Prostate gland (tissue), 2 donors: ENCODE measurements at regions of chr9 and their contacts with region 1.

Region 1: DNA sequence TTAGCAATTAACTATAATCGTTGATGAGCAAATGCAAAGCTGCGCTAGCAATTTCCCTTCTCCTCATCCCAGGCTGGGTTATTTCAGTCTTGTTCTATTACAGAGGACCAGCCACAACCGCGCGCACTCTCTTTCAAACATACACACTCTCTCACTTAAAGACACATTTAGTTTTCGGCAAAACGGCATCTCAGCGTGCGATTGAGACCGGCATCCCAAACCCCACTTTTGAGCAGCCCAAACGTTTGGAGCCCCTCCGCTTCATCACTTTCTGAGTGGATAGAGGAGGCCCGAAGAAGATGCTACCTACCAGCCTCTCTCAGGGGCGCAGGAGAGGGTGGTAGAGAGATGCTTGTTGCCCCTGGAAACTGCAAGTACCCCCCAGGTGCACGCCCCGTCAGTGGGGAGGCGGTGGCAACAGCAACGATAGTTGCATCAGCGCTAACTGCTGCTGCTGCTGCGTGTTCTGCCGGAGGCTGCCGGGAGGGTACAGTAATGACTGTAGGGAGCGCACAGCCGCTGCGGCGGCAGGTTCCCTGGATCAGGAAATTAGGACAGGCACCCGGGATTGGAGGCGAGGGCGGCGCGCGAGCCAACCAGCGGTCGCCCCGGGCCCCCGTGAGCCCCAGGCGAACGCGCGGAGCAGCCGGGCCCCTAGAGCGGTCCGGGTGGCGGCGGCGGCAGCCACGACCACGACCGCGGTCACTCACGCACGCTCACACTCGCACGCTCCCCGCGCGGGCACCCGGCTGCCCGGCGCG is 488 bp upstream of the VLDLR start:
- DNase-seq: peak; percentile 72
- H3K4me3 ChIP-seq: peak overlapping the region; percentile 56 to 73
- H3K27ac ChIP-seq: peak overlapping the region; percentile 78 to 86
- H3K4me1 ChIP-seq: peaks cover 5% of the 10 kb centered on the region
- H3K27me3 ChIP-seq: no peaks in the 10 kb centered on the region
- CTCF ChIP-seq: peak in 2 of 4 experiments; percentile 7 to 55
- POLR2A ChIP-seq: no peak

Region 2: DNA sequence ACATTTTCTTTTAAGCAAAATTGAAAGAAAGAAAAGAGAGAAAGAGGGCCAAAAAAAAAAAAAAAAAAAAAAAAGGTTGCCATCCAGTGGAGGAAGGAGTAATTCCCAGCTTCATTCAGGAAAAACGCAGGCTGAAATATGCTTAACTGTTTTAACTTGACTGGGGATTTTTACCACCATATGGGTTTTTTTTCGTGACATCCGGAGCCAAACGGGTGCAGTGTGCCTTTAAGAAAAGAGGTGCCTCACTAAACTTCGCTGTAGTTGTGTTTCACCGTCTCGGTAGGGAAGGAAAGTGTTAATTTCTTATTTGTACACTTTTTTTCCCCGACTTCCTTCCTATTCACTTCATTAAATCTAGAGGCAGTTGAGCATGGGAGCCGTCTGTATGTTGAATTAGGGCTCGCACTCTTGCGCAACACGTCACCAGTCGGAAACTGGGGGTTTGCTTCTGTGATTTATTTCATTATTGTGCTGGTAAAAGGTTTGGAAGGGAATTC is 462.9 kb before region 1 on chr9:
- intact Hi-C with region 1: loop called (anchors 10 kb)
- DNase-seq: peak; percentile 44
- H3K4me3 ChIP-seq: peak overlapping the region; percentile 27 to 28
- H3K27ac ChIP-seq: peak overlapping the region; percentile 42 to 65
- H3K4me1 ChIP-seq: no peaks in the 10 kb centered on the region
- H3K27me3 ChIP-seq: no peaks in the 10 kb centered on the region
- CTCF ChIP-seq: no peak
- POLR2A ChIP-seq: no peak

Region 3: GRCh38 chr9:2494562-2494961 is 126.5 kb before region 1 on chr9:
- intact Hi-C with region 1: loop called (anchors 10 kb)
- DNase-seq: no peak
- H3K4me3 ChIP-seq: no peak overlapping the region
- H3K27ac ChIP-seq: no peak overlapping the region
- H3K4me1 ChIP-seq: no peaks in the 10 kb centered on the region
- H3K27me3 ChIP-seq: no peaks in the 10 kb centered on the region
- CTCF ChIP-seq: no peak
- POLR2A ChIP-seq: no peak

Region 4: GRCh38 chr9:2663486-2664383 is 42.6 kb after region 1 on chr9:
- intact Hi-C with region 1: loop called (anchors 2 kb)
- DNase-seq: no peak
- H3K4me3 ChIP-seq: no peak overlapping the region
- H3K27ac ChIP-seq: peak overlapping the region; percentile 45 to 48
- H3K4me1 ChIP-seq: no peaks in the 10 kb centered on the region
- H3K27me3 ChIP-seq: no peaks in the 10 kb centered on the region
- CTCF ChIP-seq: no peak
- POLR2A ChIP-seq: no peak

Region 5: DNA sequence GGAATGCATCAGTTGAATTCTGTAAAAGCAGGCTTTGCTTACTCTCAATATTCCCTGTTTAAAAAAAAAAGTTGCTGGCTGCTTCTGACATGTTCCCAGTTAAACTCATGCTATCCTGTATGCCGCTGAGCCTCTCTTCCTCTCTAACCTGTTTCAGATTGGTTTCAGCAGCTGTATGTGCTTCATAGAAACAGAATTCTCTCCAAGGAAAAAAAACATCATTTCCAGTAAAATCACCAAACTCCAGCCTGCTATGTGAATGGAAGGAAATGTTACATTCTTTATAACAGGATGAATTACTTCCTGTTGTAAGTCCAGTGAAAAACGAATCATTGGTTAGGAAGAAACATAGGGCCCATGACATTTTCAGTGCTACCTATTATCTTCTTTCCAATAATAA is 70.5 kb after region 1 on chr9:
- intact Hi-C with region 1: no loop called
- DNase-seq: no peak
- H3K4me3 ChIP-seq: no peak overlapping the region
- H3K27ac ChIP-seq: no peak overlapping the region
- H3K4me1 ChIP-seq: no peaks in the 10 kb centered on the region
- H3K27me3 ChIP-seq: no peaks in the 10 kb centered on the region
- CTCF ChIP-seq: no peak
- POLR2A ChIP-seq: no peak

Region 6: GRCh38 chr9:2816476-2817141 is 195.5 kb after region 1 on chr9:
- intact Hi-C with region 1: loop called (anchors 5 kb)
- DNase-seq: no peak
- H3K4me3 ChIP-seq: no peak overlapping the region
- H3K27ac ChIP-seq: no peak overlapping the region
- H3K4me1 ChIP-seq: no peaks in the 10 kb centered on the region
- H3K27me3 ChIP-seq: no peaks in the 10 kb centered on the region
- CTCF ChIP-seq: no peak
- POLR2A ChIP-seq: no peak

Region 7: GRCh38 chr9:3586066-3586465 is 965.0 kb after region 1 on chr9:
- intact Hi-C with region 1: no loop called
- DNase-seq: no peak
- H3K4me3 ChIP-seq: no peak overlapping the region
- H3K27ac ChIP-seq: no peak overlapping the region
- H3K4me1 ChIP-seq: no peaks in the 10 kb centered on the region
- H3K27me3 ChIP-seq: no peaks in the 10 kb centered on the region
- CTCF ChIP-seq: no peak
- POLR2A ChIP-seq: no peak